GM10248 (cell line): ENCODE measurements at regions of chr10 and their contacts with region 1.

Region 1: DNA sequence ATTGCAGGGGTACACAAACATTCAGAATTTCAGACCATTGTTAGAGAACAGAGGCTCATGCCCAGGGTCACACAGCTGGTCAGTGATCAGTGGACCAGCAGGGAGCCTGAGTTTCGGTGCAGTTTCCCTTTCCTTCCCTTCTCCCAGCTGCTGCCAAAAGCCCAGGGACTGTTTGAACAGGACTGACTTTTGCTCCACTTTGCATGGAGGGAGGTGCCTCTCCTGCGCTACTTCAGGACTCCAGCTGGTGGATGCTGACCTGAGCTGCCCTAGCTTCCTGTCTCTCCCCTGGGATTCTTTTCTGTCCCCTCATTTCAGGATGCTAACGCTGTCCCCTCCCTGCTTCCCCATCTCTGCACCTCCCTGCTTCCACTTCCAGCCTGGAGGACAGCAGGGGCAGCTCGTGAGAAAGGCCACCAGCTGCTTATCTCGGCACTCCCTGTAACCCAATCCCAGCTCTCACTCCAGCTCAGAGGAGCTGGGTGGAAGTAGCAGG is 14.5 kb downstream of the SH2D4B start:
- DNase-seq: no peak
- CTCF ChIP-seq: no peak

Region 2: DNA sequence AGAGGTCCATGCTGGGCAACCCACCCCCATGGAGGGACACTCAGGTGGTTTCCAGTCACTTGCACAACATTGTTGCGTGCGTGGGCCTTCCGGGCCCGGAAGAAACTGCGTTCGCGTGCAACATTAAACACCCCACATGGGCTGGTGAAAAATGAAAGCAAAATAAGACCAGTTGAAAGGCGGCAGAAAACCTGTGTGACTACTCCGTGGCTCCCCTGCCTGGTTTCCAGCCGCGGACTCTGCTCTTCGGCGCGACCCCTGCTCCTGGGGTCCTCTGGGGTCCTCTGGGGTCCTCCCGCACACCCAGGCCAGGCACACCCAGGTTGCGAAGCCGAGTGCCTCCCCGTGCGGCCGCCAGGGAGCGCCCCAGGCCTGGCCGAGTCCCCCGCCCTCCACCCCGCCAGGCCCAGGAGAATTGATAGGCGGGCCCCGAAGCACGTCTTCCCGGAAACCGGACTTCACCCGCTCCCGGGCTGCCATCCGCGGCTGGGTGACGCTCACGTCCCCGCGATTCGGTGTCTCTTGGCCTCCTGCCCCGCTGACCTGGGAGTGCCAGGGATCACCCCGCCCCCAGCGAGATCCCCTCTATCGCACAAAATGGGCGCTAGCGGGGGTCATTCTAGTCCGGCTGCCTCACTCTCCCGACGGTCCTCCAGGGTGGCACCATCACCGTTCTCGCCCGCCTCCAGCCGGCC is 16.4 kb before region 1 on chr10:
- CTCF ChIA-PET with region 1: interaction called, 10 read pairs
- POLR2A ChIA-PET with region 1: no interaction called
- DNase-seq: peak; percentile 88
- CTCF ChIP-seq: peak; percentile 94